ENCODE measurements at regions of chr12 and their contacts with region 1.

Region 1: DNA sequence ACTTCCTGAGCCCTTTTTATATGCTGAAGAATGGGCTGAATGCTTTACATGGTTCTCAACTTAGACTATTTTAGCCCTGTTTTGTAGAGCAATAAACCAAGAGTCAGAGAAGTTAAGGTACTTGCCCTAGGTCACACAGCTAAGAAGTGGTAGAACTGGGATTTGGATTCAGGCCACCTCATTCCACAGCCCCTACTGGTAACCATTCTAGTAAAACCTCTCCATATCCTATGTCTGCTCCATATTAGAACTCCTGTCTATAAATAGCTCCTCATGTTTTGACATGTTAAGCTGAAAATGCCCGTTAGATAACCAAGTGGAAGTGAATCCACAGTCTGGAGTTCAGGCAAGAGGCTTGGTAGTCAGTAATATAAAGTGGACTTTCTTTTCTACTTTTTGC is 111.6 kb downstream of the HECTD4 start:
- DNase-seq: no peak

Region 2: GRCh38 chr12:112341046-112341825 is 70.6 kb after region 1 on chr12:
- in situ Hi-C with region 1: loop called (anchors 5 kb)
- DNase-seq: no peak

Measured in ACHN (cell line).